Activated CD8-positive, alpha-beta T cell treated with anti-CD3 and anti-CD28 coated beads for 36 hours (primary cell): ENCODE measurements at regions of chr14 and their contacts with region 1.

Region 1: GRCh38 chr14:106766145-106766544 is 1239.8 kb downstream of the TMEM121 start:
- DNase-seq: no peak
- ATAC-seq: no peak
- H3K4me3 Mint-ChIP-seq: no peak overlapping the region
- H3K27ac Mint-ChIP-seq: peak overlapping the region; percentile 34
- H3K4me1 Mint-ChIP-seq: peaks cover 54% of the 10 kb centered on the region
- H3K27me3 Mint-ChIP-seq: peaks cover 2% of the 10 kb centered on the region
- CTCF ChIP-seq: no peak

Region 2: DNA sequence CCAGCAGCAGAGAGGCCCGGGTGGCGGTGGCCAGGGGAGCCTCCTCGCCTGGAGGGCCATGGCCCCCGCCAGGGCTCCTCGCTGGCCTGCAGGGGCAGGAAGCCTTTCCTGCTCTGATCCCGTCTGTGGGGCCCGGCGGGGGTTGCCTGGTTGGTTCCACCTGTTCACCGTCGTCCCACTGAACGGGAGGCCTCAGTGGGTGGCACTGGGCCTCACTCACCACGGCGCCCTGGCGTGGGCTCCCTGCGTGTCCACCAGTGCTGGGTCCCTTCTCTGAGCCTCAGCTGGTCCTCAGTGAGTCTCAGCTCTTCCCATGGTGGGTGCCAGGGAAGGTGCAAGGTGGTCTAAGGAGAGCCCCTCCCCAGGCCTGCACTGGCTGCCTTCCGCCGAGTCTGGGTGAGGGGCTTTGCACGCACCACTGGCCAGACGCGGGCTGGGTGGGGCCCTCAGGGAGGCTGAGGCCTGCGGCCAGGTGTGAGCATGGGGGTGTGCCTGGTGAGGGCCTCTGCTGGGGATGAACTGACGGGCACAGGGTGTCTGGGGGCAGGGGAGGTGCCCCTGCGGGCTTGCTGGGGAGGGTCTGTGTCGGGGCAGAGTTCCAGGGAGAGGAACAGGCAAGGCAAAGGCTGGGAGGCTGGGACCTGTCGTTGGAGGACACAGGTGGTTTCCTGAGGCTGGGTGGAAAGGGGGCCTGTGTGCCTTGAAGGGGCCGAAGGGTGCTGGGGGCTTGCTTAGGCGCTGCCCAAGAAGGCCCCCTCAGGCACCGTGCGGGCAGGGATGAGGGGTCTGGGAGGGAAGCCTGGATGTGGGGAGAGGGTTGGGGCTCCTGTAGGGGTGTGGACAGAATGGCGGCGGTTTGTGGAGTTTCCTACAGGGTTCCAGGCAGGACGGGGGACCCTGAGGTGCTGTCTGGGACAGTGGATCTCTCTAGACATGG is 900.0 kb before region 1 on chr14:
- CTCF ChIA-PET with region 1: no interaction called
- POLR2A ChIA-PET with region 1: no interaction called
- intact Hi-C with region 1: no loop called
- DNase-seq: no peak
- ATAC-seq: no peak
- H3K4me3 Mint-ChIP-seq: no peak overlapping the region
- H3K27ac Mint-ChIP-seq: no peak overlapping the region
- H3K4me1 Mint-ChIP-seq: peaks cover 24% of the 10 kb centered on the region
- H3K27me3 Mint-ChIP-seq: no peaks in the 10 kb centered on the region
- CTCF ChIP-seq: no peak

Region 3: DNA sequence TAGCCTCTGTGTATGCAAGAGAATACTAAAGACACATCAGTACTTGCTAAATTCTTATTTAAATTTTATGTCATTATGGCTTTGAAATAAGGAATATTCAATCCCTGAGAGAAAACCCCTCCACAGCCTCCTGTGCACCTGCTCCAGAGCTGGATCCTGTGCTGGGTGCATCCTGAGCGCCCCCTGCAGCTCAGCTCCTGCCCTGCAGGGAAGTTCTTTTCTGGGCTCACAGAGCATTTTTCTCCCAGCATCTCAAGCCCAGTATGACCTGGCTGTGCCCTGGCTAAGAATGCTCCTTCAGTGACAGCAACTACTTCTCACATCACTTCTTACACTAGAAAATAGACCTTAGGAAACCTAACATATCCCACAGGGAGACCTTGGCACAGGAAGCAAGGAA is 28.1 kb before region 1 on chr14:
- CTCF ChIA-PET with region 1: interaction called, 12 read pairs
- POLR2A ChIA-PET with region 1: no interaction called
- intact Hi-C with region 1: no loop called
- DNase-seq: peak; percentile 54
- ATAC-seq: no peak
- H3K4me3 Mint-ChIP-seq: no peak overlapping the region
- H3K27ac Mint-ChIP-seq: no peak overlapping the region
- H3K4me1 Mint-ChIP-seq: peaks cover 17% of the 10 kb centered on the region
- H3K27me3 Mint-ChIP-seq: peaks cover 1% of the 10 kb centered on the region
- CTCF ChIP-seq: peak; percentile 65

Region 4: GRCh38 chr14:106812788-106813476 is 46.8 kb after region 1 on chr14:
- CTCF ChIA-PET with region 1: no interaction called
- POLR2A ChIA-PET with region 1: no interaction called
- intact Hi-C with region 1: no loop called
- DNase-seq: no peak
- ATAC-seq: no peak
- H3K4me3 Mint-ChIP-seq: no peak overlapping the region
- H3K27ac Mint-ChIP-seq: no peak overlapping the region
- H3K4me1 Mint-ChIP-seq: peaks cover 12% of the 10 kb centered on the region
- H3K27me3 Mint-ChIP-seq: peaks cover 2% of the 10 kb centered on the region
- CTCF ChIP-seq: no peak